BJ (cell line): ENCODE measurements at regions of chr17 and their contacts with region 1.

Region 1: DNA sequence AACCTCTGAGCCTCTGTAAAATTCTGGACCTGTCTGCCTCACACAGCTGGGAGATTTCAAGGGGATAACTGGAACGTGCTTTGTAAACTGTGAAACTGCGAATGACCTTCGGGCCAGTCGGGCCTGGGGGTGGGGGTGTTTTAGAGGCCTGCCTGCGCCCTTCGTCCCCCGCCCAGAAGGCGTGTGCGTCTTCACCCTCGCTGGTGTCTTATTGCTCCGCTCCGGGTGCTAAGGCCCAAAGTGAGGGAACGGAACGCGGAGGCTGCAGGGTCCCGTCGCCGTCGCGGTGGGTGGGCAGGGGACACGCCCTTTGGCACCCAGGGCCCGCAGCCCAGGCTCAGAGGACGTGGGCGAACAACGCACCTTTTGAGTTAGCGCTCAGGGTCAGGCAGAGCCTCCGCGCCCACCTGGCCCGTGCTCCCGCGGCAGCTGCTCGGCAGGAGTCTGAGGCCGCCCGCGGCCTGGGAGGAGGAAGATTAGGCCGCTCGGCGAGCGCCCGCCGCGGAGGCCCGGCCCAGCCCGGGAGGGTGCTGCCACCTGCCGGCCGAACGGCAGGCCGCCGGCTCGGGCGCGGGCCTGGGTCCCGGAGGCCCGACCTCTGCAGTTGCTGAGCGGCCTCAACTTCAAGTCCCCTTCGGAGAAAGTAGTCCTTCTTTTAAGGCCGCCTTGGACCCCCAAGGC is 29.7 kb downstream of the DCAKD start:
- DNase-seq: no peak
- H3K4me3 ChIP-seq: peak overlapping the region; percentile 26
- H3K27me3 ChIP-seq: no peaks in the 10 kb centered on the region
- CTCF ChIP-seq: peak; percentile 56

Region 2: DNA sequence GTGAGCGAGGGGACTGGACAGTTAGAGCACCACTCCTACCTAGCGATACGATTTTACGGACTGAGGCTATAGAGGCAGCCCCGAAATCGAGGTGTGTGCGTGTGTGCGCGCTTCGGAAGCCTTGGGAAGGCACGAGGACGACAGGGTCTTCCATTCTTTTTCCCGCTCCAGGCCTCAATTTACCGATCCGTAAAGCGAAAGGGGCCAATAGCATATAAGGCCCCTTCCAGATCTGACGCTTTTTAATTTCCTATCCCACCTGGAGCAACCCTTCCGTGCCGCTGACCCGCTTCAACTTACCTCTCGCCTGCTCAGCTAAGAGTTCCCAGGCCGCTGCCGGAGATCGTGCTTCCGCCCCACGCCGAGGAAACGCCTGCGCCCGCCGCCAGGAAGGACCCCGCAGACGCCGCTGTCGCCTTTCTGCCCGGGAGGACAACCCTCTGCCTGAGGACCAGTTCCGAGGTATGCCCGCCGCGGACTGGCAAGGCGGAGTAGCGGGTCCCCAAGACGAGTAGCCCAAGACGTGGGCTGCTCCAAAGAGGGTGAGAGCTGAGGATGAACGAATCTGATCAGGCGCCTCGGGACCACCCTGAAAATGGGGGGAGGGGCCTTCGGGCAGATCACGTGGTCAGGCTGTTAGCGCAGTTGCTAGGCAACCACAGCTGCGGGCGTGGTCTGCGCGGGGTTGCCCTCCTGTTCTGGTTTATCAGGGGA is 122.5 kb before region 1 on chr17 and contains the start of gene EFTUD2:
- CTCF ChIA-PET with region 1: interaction called, 63 read pairs
- POLR2A ChIA-PET with region 1: no interaction called
- DNase-seq: no peak
- H3K4me3 ChIP-seq: peak within 1 kb of the TSS; percentile 84
- H3K27me3 ChIP-seq: no peaks in the 10 kb centered on the region
- CTCF ChIP-seq: no peak
- polyA plus RNA-seq, gene EFTUD2: 72.0 and 121 TPM in 2 replicates

Region 3: GRCh38 chr17:44911133-44912001 is 110.4 kb before region 1 on chr17:
- CTCF ChIA-PET with region 1: interaction called, 259 read pairs
- POLR2A ChIA-PET with region 1: no interaction called
- DNase-seq: no peak
- H3K4me3 ChIP-seq: no peak overlapping the region
- H3K27me3 ChIP-seq: 0 out of 2 replicates have a peak, but pooled peaks cover 1% of the 10 kb centered on the region
- CTCF ChIP-seq: peak; percentile 62

Region 4: DNA sequence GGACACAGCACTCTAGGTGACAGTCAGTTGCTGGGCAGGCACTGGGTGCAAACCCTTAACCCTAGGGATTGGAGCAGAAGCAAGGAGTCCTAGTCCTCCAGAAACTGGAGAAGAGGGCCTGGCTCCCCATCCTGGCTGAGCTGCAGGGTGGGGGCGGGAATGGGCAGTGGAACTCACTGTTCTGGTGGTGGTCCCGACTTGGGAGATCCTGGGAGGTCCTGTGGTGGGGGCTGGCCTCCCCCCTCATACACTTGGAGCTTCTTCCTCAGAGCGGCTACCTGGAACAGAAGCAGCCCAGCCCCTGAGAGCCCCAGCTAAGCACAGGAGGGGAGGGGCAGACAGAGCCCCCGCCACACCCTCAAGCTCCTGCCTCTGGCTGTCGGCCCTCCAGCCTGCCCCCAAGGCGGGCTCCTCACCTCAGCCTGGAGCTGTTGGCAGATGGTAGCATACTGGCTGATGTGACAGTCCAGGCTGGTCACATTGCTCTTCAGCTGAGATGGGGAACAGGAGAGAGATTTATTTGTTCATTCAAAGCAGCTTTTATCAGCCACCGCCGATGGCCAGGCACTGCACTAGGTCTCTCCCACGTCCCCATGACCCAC is 89.2 kb before region 1 on chr17:
- CTCF ChIA-PET with region 1: interaction called, 259 read pairs
- POLR2A ChIA-PET with region 1: no interaction called
- DNase-seq: no peak
- H3K4me3 ChIP-seq: no peak overlapping the region
- H3K27me3 ChIP-seq: no peaks in the 10 kb centered on the region
- CTCF ChIP-seq: no peak

Region 5: GRCh38 chr17:45038728-45039634 is 17.2 kb after region 1 on chr17:
- CTCF ChIA-PET with region 1: interaction called, 18 read pairs
- POLR2A ChIA-PET with region 1: no interaction called
- DNase-seq: no peak
- H3K4me3 ChIP-seq: no peak overlapping the region
- H3K27me3 ChIP-seq: no peaks in the 10 kb centered on the region
- CTCF ChIP-seq: no peak

Region 6: DNA sequence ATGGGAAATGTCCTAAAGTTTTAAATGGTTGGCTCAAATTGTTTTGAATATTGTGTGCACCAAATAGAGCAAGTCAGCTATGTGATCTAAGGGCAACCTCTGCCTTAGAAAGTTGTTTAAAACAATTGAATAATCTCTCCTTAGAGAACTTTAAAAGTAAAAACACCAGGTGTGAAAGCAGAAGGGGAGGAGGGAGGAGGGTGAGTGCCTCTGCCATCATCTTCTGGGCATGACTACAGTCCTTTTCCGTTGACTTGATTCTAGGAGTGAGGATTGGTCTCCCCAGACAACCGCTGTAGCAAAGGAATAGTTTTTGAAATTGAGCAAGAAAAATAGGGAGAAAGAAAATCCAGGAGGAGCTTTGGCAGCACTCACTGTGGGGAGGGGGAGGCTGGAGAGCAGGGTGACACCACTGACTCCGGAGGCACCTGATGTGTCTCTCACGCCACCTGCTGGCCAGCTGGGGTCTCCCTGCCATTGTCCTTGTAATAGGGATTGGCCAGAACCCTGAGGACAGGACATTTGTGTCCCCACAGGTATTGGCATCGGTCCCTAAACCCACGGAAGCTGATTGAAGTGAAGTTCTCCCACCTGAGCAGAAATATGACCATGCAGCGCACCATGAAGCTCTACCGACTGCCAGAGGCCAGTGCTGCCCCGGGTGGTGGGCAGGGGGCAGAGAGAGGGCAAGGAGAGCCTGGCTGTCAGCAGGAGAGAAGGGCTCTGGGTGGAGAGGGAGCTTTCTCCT is 77.3 kb after region 1 on chr17:
- CTCF ChIA-PET with region 1: interaction called, 28 read pairs
- POLR2A ChIA-PET with region 1: no interaction called
- DNase-seq: no peak
- H3K4me3 ChIP-seq: no peak overlapping the region
- H3K27me3 ChIP-seq: no peaks in the 10 kb centered on the region
- CTCF ChIP-seq: peak; percentile 91